ENCODE measurements at regions of chr3 and their contacts with region 1.

Region 1: DNA sequence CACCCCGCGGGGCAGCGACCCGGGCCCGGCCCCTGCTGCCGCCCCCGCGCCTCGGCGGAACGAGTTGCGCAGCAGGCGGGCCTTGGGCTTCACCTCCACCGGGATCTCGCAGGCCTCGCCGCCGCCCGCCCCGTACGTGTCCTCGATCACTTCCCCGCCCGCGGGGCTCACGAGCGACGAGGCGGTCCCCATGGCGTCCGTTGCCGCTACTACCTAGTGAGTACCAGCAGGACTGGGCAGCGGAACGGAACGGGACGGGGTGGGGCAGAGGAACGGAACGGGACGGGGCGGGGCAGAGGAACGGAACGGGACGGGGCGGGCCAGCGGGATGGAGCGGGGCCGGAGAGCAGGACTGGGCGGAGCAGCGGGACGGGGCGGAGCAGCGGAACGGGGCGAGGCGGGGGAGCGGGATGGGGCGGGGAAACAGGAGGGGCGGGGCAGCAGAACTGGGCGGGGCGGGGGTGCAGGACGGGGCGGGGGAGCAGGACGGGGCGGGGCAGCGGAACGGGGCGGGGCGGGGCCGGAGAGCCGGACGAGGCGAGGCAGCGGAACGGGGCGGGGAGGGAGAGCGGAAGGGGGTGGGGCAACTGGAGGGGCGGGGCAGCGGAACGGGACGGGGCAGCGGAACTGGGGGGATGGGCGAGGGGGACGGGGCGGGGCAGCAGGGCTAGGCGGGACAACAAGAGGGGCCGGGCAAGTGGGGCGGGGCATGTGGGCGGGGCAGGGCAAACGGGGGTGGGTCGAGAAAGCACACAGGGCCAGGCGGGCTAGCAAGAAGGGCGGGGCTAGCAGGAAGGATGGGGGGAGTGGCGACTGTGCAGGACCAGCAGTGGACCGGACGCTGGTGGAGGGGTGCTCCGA is at the start of gene NPHP3:
- DNase-seq: peak; percentile 82 to 97
- ATAC-seq: peak; percentile 78 to 92 (median 80)
- H3K4me3 ChIP-seq: peak within 1 kb of the TSS; percentile 68
- H3K4me3 Mint-ChIP-seq: peak within 1 kb of the TSS; percentile 91
- H3K27ac ChIP-seq: peak within 1 kb of the TSS; percentile 49
- H3K27ac Mint-ChIP-seq: peak within 1 kb of the TSS; percentile 59 to 82
- H3K4me1 ChIP-seq: peaks cover 19% of the 10 kb centered on the region
- H3K4me1 Mint-ChIP-seq: peaks cover 20 to 29% of the 10 kb centered on the region in 2 donors
- H3K27me3 ChIP-seq: no peaks in the 10 kb centered on the region
- H3K27me3 Mint-ChIP-seq: peaks cover 0 to 4% of the 10 kb centered on the region in 2 donors
- CTCF ChIP-seq: no peak
- total RNA-seq, gene NPHP3: 17.9 to 20.1 (median 20.0) TPM

Region 2: DNA sequence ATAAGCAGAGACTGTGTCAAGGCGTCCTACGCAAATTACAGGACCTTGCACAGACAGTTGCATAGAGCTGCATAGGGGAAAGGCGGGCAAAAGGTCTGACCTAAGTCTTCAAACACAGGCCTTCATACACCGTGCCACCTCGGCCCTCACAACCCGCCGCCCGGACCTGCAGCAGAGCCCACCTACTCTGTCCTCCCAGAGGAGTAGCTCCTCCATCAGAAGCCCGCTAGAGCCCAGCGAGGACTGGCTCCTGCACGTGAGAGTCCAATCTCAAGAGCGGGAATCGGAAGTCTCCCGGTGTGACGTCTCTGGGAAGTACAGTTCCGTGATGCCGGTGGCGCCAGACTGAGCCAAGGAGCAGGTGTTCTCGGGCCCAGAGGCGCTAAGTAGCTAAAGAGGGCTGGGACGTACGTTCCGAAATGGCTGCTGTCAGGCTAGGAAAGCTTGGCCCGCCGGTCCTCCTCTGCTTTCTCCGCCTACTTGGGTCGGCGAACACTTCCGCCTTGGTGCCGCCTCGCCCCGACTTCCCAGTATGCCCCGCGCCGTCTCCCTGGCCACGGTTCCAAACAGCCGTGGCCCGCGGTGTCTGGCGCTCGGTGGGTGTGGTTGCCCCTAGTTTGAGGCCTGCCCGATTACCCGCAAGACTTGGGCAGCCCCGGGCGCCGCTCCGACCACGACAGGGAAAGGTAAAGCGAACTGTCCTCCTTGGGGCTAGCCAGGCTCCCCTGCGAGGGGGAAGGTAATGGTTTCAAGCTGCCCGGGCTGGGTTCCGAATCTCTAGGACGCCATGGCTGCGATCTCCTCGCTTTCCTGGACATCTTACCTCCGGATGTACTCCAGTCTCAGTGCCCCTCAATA is 1695.8 kb before region 1 on chr3 and contains the starts of genes ASTE1 and NEK11:
- intact Hi-C with region 1: loop called (anchors 10 kb)
- DNase-seq: peak; percentile 89 to 95
- ATAC-seq: peak; percentile 96 to 99 (median 96)
- H3K4me3 ChIP-seq: peak within 1 kb of the TSS; percentile 97
- H3K4me3 Mint-ChIP-seq: peak within 1 kb of the TSS; percentile 97
- H3K27ac ChIP-seq: peak within 1 kb of the TSS; percentile 98
- H3K27ac Mint-ChIP-seq: peak within 1 kb of the TSS; percentile 97 to 98
- H3K4me1 ChIP-seq: peaks cover 20% of the 10 kb centered on the region
- H3K4me1 Mint-ChIP-seq: peaks cover 44 to 51% of the 10 kb centered on the region in 2 donors
- H3K27me3 ChIP-seq: no peaks in the 10 kb centered on the region
- H3K27me3 Mint-ChIP-seq: no peaks in the 10 kb centered on the region
- CTCF ChIP-seq: no peak
- total RNA-seq, gene ASTE1: 22.8 to 28.8 (median 24.3) TPM
- total RNA-seq, gene NEK11: 2.6 to 3.6 (median 3.5) TPM

Region 3: GRCh38 chr3:132416807-132417694 is 305.3 kb before region 1 on chr3 and contains the start of gene DNAJC13:
- intact Hi-C with region 1: loop called (anchors 5 kb)
- DNase-seq: peak; percentile 85 to 97
- ATAC-seq: peak; percentile 92 to 97 (median 94)
- H3K4me3 ChIP-seq: peak within 1 kb of the TSS; percentile 98
- H3K4me3 Mint-ChIP-seq: peak within 1 kb of the TSS; percentile 99
- H3K27ac ChIP-seq: peak within 1 kb of the TSS; percentile 82
- H3K27ac Mint-ChIP-seq: peak within 1 kb of the TSS; percentile 84 to 95
- H3K4me1 ChIP-seq: peaks cover 10% of the 10 kb centered on the region
- H3K4me1 Mint-ChIP-seq: peaks cover 15 to 22% of the 10 kb centered on the region in 2 donors
- H3K27me3 ChIP-seq: no peaks in the 10 kb centered on the region
- H3K27me3 Mint-ChIP-seq: peaks cover 1 to 4% of the 10 kb centered on the region in 2 donors
- CTCF ChIP-seq: no peak
- total RNA-seq, gene DNAJC13: 30.5 to 44.0 (median 42.9) TPM

Region 4: GRCh38 chr3:132519914-132520313 is 202.5 kb before region 1 on chr3:
- intact Hi-C with region 1: no loop called
- DNase-seq: no peak
- ATAC-seq: no peak
- H3K4me3 ChIP-seq: no peak overlapping the region
- H3K4me3 Mint-ChIP-seq: no peak overlapping the region
- H3K27ac ChIP-seq: no peak overlapping the region
- H3K27ac Mint-ChIP-seq: no peak overlapping the region
- H3K4me1 ChIP-seq: no peaks in the 10 kb centered on the region
- H3K4me1 Mint-ChIP-seq: no peaks in the 10 kb centered on the region
- H3K27me3 ChIP-seq: no peaks in the 10 kb centered on the region
- H3K27me3 Mint-ChIP-seq: no peaks in the 10 kb centered on the region
- CTCF ChIP-seq: no peak

Region 5: DNA sequence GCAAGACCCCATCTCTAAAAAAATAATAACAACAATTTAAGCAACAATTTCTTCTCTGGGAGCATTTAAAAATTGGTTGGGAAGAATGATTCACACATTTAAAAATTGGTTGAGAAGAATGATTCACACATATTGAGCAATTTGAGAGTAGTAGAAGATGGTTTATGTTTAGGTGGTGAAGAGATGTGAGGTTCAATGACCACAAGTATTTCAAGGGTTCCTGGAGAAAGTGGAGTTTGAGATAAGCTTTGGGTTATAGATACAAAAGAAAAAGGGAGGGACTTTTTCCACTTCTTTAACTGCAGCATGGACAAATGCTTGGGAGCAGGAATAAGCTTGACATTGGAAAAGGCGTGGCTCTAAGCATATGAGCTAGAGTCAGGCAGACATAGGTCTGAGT is 145.6 kb after region 1 on chr3:
- intact Hi-C with region 1: no loop called
- DNase-seq: no peak
- ATAC-seq: no peak
- H3K4me3 ChIP-seq: no peak overlapping the region
- H3K4me3 Mint-ChIP-seq: no peak overlapping the region
- H3K27ac ChIP-seq: no peak overlapping the region
- H3K27ac Mint-ChIP-seq: no peak overlapping the region
- H3K4me1 ChIP-seq: no peaks in the 10 kb centered on the region
- H3K4me1 Mint-ChIP-seq: no peaks in the 10 kb centered on the region
- H3K27me3 ChIP-seq: no peaks in the 10 kb centered on the region
- H3K27me3 Mint-ChIP-seq: peaks cover 0 to 4% of the 10 kb centered on the region in 2 donors
- CTCF ChIP-seq: no peak

Region 6: DNA sequence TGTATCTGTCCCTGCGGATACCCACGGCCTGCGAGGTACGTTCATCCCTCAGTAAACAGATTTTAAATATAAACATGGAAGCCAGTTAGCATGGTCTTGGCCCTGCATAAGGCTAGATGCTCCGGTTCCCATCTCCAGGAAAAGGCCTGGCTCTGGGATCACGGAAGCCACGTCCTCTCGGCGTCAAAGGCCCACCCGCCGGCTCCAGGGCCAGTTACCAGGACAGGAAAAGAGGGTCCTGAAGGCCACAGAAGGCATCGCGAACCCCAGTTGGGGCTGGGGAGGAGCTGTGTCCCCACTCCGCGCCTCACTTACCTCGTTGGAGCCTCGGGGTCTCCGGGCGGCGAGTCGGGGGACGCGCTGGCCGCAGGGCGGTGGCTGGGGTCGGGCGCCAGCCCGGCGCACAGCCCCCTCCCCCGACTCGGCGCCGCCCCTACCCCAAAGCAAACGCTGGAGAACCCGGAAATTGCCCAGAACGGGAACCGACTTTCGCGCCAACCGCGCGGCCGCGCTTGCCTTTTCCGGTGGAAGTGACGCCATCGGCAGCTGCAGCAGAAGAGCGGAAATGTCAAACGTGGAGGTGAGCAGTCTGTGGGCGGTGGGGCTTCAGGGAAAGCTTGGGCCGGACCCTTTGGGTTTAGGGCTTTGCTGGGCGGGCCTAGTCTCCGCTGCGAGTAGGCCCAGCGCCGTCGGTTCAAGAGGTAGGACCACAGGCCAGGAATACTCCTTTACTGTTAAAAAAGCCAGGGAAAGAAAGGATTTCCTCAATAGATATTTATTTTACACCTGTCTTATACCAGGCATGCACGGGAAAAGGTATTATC is 939.3 kb after region 1 on chr3 and contains the start of gene TOPBP1:
- intact Hi-C with region 1: loop called (anchors 5 kb)
- DNase-seq: peak; percentile 76 to 93
- ATAC-seq: peak; percentile 81 to 93 (median 89)
- H3K4me3 ChIP-seq: peak within 1 kb of the TSS; percentile 79
- H3K4me3 Mint-ChIP-seq: peak within 1 kb of the TSS; percentile 97
- H3K27ac ChIP-seq: peak within 1 kb of the TSS; percentile 74
- H3K27ac Mint-ChIP-seq: peak within 1 kb of the TSS; percentile 95 to 97
- H3K4me1 ChIP-seq: peaks cover 15% of the 10 kb centered on the region
- H3K4me1 Mint-ChIP-seq: peaks cover 40 to 43% of the 10 kb centered on the region in 2 donors
- H3K27me3 ChIP-seq: no peaks in the 10 kb centered on the region
- H3K27me3 Mint-ChIP-seq: no peaks in the 10 kb centered on the region
- CTCF ChIP-seq: no peak
- total RNA-seq, gene TOPBP1: 48.1 to 52.9 (median 50.9) TPM

Region 7: GRCh38 chr3:133927540-133928066 is 1205.2 kb after region 1 on chr3:
- intact Hi-C with region 1: loop called (anchors 5 kb)
- DNase-seq: peak; percentile 71 to 89
- ATAC-seq: peak; percentile 92 to 99 (median 97)
- H3K4me3 ChIP-seq: peak overlapping the region; percentile 41
- H3K4me3 Mint-ChIP-seq: peak overlapping the region; percentile 81
- H3K27ac ChIP-seq: no peak overlapping the region
- H3K27ac Mint-ChIP-seq: peak overlapping the region in 1 of 2 donors; percentile 52
- H3K4me1 ChIP-seq: peaks cover 10% of the 10 kb centered on the region
- H3K4me1 Mint-ChIP-seq: peaks cover 5 to 17% of the 10 kb centered on the region in 2 donors
- H3K27me3 ChIP-seq: no peaks in the 10 kb centered on the region
- H3K27me3 Mint-ChIP-seq: peaks cover 18 to 19% of the 10 kb centered on the region in 2 donors
- CTCF ChIP-seq: peak; percentile 66

Measured in natural killer cell (primary cell).